ENCODE measurements at regions of chr6 and their contacts with region 1.

Region 1: GRCh38 chr6:169950558-169950957 is 199.1 kb downstream of the ERMARD start:
- DNase-seq: peak; percentile 58
- ATAC-seq: peak; percentile 58
- H3K4me3 Mint-ChIP-seq: no peak overlapping the region
- H3K27ac Mint-ChIP-seq: no peak overlapping the region
- H3K4me1 Mint-ChIP-seq: peaks cover 9% of the 10 kb centered on the region
- H3K27me3 Mint-ChIP-seq: no peaks in the 10 kb centered on the region
- CTCF ChIP-seq: peak; percentile 44

Region 2: GRCh38 chr6:169961772-169962561 is 11.4 kb after region 1 on chr6:
- CTCF ChIA-PET with region 1: interaction called, 24 read pairs
- POLR2A ChIA-PET with region 1: interaction called, 3 read pairs
- intact Hi-C with region 1: no loop called
- DNase-seq: peak; percentile 55
- ATAC-seq: peak; percentile 65
- H3K4me3 Mint-ChIP-seq: peak overlapping the region; percentile 64
- H3K27ac Mint-ChIP-seq: peak overlapping the region; percentile 58
- H3K4me1 Mint-ChIP-seq: peaks cover 26% of the 10 kb centered on the region
- H3K27me3 Mint-ChIP-seq: peaks cover 2% of the 10 kb centered on the region
- CTCF ChIP-seq: peak; percentile 69

Region 3: DNA sequence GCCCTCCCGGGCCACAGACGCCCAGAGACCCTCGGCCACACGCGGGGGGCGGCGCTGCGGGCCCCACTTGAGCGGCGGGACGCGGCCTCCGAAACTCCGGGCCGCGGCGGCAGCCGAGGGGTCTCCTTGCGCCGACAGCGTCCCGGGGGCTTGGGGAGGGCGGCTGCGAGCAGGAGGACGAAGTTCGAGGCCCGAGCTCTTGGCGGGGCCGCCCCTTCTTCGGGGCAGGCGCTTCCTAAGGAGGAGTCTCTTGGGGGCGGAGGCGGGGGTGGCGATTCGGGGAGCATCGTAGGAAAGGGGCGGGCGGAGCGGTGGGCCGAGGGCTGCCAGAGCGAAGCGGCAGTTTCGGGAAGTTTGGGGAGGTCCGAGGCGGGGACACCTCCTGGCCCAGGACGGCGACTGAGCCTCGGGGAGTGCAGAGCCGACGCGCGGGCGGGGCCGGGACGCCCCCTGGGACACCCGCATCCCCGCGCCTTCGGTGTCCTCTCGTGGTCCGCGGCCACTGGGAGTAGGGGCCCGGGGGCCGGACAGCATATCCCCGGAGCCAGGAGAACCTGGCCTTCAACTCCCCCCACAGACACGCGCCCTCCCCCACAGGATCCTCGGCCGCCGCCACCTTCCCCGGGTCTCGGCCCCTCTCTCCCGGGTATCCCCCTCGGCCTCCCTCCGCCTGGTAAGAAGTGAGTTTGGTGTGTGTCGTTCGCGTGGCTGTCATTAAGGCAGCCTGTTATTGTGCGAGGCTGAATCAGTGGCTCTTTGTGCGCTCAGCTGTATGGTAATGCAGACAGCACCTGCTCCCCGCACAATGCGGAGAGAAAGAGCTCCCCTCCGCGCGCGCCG is 340.9 kb after region 1 on chr6:
- CTCF ChIA-PET with region 1: interaction called, 8 read pairs
- POLR2A ChIA-PET with region 1: no interaction called
- intact Hi-C with region 1: loop called (anchors 5 kb)
- DNase-seq: peak; percentile 68
- ATAC-seq: peak; percentile 50
- H3K4me3 Mint-ChIP-seq: peak overlapping the region; percentile 73
- H3K27ac Mint-ChIP-seq: no peak overlapping the region
- H3K4me1 Mint-ChIP-seq: peaks cover 40% of the 10 kb centered on the region
- H3K27me3 Mint-ChIP-seq: peaks cover 41% of the 10 kb centered on the region
- CTCF ChIP-seq: no peak

Region 4: DNA sequence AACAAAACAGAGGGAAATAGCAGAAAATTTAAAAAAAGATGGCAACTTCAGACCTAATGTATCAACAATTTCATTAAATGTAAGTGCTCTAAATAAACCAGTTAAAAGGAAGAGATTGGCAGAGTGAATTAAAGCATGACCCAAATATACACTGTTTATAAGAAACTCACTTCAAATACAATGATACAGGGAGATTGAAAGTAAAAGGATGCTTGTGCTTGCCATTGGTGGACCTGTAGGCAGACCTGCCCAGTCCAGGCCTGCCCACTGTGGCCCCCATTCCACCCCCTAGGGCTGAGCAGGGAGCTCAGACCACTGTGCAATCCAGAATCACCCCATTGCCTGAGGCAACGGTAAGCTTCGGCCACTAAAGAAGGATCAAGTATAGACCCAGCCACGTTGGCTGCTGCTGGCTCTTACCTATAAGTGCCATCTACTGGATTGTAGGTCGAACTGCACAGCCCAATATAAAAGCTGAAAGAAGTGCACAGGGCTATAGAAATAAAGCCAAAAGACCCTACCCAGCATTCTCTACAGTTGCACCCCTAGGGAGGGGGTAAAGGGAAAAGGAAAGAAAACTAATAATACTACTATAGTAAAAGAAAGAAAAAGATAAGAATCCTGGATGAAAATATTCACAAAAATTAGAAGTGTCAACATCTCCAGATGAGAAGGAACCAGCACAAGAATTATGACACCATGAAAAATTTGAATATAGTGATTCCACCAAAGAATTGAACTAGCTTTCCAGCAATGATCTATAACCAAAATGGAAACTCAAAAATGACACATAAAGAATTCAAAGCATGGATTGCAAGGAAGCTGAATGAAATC is 566.4 kb after region 1 on chr6:
- CTCF ChIA-PET with region 1: interaction called, 15 read pairs
- POLR2A ChIA-PET with region 1: no interaction called
- intact Hi-C with region 1: no loop called
- DNase-seq: peak; percentile 62
- ATAC-seq: peak; percentile 99
- H3K4me3 Mint-ChIP-seq: no peak overlapping the region
- H3K27ac Mint-ChIP-seq: no peak overlapping the region
- H3K4me1 Mint-ChIP-seq: no peaks in the 10 kb centered on the region
- H3K27me3 Mint-ChIP-seq: peaks cover 10% of the 10 kb centered on the region
- CTCF ChIP-seq: peak; percentile 84